Sigmoid colon (tissue), 7 donors: ENCODE measurements at regions of chr15 and their contacts with region 1.

Region 1: DNA sequence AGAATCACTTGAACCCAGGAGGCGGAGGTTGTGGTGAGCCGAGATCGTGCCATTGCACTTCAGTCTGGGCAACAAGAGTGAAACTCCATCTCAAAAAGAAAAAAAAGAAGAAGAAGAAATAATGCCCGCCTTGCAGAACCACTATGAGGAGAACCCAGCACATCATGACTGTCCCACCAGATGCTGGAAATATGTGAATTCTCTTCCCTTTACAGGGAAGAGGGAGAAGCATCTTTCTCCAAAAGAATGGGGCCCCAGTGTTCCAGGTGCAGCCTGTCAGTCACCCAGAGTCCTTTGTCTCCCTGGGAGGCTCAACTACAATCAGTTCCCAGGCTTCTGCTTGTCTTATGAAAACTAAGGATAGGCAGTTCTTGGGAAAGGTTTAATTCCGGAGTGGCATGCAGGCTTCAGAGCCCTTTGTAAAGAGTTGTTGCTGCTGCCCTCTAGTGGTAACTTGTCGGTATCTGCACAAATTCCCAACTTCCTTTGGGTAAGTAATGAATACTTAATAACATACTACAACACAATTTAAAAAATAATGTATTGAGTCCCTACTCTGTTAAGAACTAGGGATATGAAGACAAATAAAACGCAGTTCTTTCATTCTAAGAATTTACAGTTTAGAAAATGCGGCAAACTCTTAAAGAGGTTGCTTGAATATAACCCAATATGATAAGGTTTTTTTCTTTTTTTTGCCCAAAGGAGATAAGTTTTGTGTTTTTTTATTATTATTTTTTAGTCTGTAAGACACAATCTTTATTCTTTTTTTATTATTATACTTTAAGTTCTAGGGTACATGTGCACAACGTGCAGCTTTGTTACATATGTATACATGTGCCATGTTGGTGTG is 18.6 kb upstream of the TICRR start:
- DNase-seq: no peak
- H3K4me3 ChIP-seq: no peak overlapping the region
- H3K27ac ChIP-seq: no peak overlapping the region
- H3K4me1 ChIP-seq: no peaks in the 10 kb centered on the region
- H3K27me3 ChIP-seq: peaks cover 0 to 7% (median 0%) of the 10 kb centered on the region in 3 donors
- CTCF ChIP-seq: peak in 3 of 4 experiments; percentile 31 to 78 (median 60)
- EP300 ChIP-seq: no peak
- POLR2A ChIP-seq: no peak

Region 2: DNA sequence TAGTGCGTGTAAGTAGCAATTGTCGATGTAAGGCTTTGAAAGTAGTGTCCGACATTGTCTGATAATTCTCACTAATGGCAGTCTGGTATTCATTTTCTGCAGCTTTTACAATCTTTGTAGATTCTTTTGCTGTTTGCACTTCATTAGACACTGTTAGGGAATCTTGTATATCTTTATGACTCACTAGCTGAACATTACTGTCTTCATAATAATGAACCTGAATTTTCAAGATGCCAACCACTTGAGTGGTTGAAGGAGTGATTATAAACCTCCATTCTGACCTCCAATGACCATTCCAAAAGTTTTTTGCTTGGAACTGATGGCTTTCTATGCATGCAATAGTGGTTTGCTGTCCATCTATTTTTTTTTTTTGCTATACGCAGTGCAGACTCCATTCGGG is 567.1 kb before region 1 on chr15:
- intact Hi-C with region 1: no loop called
- DNase-seq: no peak
- H3K4me3 ChIP-seq: peak overlapping the region in 1 of 4 donors; percentile 33
- H3K27ac ChIP-seq: peak overlapping the region in 2 of 4 donors; percentile 21 to 31
- H3K4me1 ChIP-seq: peaks cover 0 to 5% (median 0%) of the 10 kb centered on the region in 4 donors
- H3K27me3 ChIP-seq: no peaks in the 10 kb centered on the region
- CTCF ChIP-seq: no peak
- EP300 ChIP-seq: no peak
- POLR2A ChIP-seq: no peak

Region 3: DNA sequence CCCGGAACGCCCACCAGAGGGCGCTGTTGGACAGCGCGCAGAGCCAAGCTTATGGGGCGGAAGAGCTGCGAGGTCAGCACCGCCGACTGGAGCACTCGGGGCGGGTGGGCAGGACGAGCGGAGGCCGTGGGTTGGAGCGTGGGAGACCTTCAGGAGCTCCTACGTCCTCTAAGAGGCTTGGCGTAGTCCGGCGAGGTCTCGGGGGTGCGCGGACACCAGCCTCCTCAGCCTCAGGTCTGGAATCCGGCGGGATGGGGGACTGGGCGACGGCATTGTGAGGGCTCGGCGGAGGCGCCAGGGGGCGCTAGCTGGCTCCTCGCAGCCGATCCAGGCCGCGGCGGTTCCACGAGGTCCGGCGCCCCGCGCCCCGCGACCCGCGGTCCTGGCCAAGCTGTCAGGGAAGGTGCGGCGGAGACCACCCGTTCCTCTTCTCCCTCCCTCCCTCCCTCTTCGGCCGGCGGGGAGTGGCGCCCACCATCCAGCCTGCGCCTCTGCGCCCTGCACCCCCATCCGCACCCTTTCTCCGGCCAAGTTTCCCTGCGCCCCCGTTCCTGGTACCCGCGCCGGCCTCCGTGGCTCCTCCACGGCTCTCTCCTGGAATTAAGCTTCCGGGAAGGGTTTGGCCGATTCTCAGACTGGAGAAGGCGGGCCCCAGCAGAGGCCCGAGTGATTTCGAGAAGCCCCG is 197.7 kb before region 1 on chr15:
- intact Hi-C with region 1: loop called (anchors 5 kb)
- DNase-seq: peak; percentile 81
- H3K4me3 ChIP-seq: peak overlapping the region; percentile 11 to 50 (median 38)
- H3K27ac ChIP-seq: no peak overlapping the region
- H3K4me1 ChIP-seq: peaks cover 0 to 32% (median 17%) of the 10 kb centered on the region in 4 donors
- H3K27me3 ChIP-seq: peaks cover 44 to 100% (median 89%) of the 10 kb centered on the region in 3 donors
- CTCF ChIP-seq: peak; percentile 96 to 100 (median 98)
- EP300 ChIP-seq: no peak
- POLR2A ChIP-seq: no peak

Region 4: DNA sequence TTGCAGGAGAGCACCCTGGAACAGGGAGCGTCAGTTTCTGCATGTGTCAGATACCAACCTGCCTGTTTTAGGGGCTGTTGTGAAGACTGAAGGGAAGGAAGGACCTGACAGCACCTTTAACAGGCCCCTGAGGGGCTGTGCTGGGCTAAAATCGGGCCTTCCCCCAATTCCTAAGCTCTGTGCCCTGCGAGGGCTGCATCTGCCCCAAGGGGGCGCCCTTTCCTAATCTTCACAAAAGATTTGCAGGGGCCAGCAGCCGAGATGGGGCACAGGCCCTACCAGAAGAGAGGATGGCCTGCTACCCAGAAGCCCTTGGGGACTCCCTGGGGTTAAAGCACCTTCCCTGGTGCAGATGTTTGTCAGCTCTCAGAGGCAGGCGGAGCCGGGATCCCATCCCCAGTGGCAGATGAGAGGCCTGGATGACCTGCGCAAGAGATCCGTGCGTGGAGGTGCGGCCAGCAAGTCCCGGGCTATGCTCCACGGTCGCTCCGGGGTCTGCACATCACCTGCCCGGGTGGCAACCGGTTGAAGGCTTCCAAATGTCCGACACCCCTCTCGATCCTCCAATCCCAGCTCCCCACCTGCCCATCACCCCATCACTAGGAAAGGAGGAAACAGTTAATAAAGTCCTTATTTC is 113.8 kb before region 1 on chr15:
- intact Hi-C with region 1: loop called (anchors 10 kb)
- DNase-seq: no peak
- H3K4me3 ChIP-seq: no peak overlapping the region
- H3K27ac ChIP-seq: no peak overlapping the region
- H3K4me1 ChIP-seq: no peaks in the 10 kb centered on the region
- H3K27me3 ChIP-seq: peaks cover 0 to 2% (median 0%) of the 10 kb centered on the region in 3 donors
- CTCF ChIP-seq: peak in 2 of 4 experiments; percentile 44 to 50
- EP300 ChIP-seq: no peak
- POLR2A ChIP-seq: no peak

Region 5: GRCh38 chr15:89630974-89631901 is 74.6 kb after region 1 on chr15:
- intact Hi-C with region 1: no loop called
- DNase-seq: no peak
- H3K4me3 ChIP-seq: no peak overlapping the region
- H3K27ac ChIP-seq: no peak overlapping the region
- H3K4me1 ChIP-seq: no peaks in the 10 kb centered on the region
- H3K27me3 ChIP-seq: no peaks in the 10 kb centered on the region
- CTCF ChIP-seq: no peak
- EP300 ChIP-seq: no peak
- POLR2A ChIP-seq: no peak